ENCODE measurements at regions of chr3 and their contacts with region 1.

Region 1: DNA sequence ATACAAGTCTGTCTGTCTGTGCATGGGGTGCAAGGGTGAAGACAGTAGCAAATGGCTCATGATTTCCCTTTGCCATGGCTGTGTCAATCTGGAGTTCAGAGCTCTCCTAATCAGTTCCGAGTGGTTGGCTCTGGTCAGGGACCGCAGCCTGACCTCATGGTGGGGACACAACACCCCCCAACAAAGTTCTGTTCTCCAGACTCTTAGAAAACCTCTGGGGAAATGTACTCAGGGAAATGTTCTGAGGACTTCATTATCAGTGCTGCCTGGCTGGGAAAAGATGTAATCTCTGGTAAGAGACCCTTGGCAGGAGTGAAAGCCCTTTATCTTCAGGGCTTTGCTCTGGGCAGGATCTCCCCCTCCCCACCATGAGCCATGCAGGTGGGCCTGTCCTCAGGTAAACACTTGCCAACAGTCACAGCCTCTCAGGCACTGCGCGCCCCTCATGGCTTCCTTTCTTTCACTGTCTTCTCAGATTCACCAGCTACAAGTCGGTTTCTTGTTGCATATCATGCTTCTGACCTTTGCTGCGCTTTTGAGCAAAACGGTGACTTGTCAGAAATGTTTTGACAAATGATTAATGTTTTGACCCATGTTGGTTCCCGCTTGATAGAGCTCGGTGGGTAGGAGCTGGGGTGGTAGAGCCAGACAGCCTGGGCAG is 95.5 kb downstream of the ST6GAL1 start:
- DNase-seq: peak; percentile 59
- H3K4me3 Mint-ChIP-seq: peak overlapping the region; percentile 84
- H3K27ac Mint-ChIP-seq: peak overlapping the region; percentile 96
- H3K4me1 Mint-ChIP-seq: peaks cover 46% of the 10 kb centered on the region
- H3K27me3 Mint-ChIP-seq: no peaks in the 10 kb centered on the region

Region 2: DNA sequence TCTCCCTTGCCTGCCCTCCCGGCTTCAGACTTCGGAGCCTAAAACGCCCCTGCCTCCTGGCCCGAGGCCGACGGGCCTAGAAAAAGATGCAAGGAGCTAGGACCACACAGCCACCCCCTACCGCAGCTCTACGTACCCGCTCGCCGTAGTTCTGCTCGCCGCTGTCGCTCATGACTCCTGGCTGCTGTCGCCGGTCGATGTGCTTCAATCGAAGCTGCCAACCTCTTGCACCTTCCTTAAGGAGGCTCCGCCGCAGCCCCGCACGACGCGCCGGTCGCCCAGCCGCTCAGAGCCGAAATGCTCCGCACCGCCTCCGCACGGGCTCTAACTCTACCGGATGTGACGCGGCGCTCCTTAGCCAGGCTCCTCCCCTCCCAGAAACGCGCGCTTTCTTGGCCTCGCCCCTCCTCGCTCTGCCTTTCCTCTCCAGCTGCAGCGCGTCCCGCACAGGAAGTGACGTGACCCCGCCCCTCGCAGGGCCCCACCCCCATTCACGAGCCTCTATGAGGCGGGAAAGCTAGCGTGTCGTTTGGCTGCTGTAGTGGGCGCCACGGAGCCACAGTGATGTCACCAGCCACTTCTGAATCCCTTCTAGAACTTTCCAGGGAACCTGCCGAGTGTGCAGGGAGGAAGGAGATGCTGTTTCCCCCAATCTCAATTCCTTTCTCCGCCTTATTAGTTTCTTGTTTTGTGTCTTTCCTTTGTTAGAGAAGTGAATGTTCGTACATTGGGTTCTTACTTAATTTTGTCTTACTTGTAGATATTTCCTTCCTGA is 1087.9 kb before region 1 on chr3 and contains the start of gene TRA2B:
- CTCF ChIA-PET with region 1: no interaction called
- POLR2A ChIA-PET with region 1: no interaction called
- intact Hi-C with region 1: loop called (anchors 10 kb)
- DNase-seq: peak; percentile 99
- H3K4me3 Mint-ChIP-seq: peak within 1 kb of the TSS; percentile 99
- H3K27ac Mint-ChIP-seq: peak within 1 kb of the TSS; percentile 99
- H3K4me1 Mint-ChIP-seq: peaks cover 21% of the 10 kb centered on the region
- H3K27me3 Mint-ChIP-seq: peaks cover 3% of the 10 kb centered on the region
- total RNA-seq, gene TRA2B: 184 to 187 TPM

Region 3: GRCh38 chr3:187000711-187001151 is 25.1 kb before region 1 on chr3:
- CTCF ChIA-PET with region 1: interaction called, 3 read pairs
- POLR2A ChIA-PET with region 1: interaction called, 4 read pairs
- intact Hi-C with region 1: loop called (anchors 1 kb)
- DNase-seq: peak; percentile 63
- H3K4me3 Mint-ChIP-seq: peak overlapping the region; percentile 5
- H3K27ac Mint-ChIP-seq: peak overlapping the region; percentile 87
- H3K4me1 Mint-ChIP-seq: peaks cover 76% of the 10 kb centered on the region
- H3K27me3 Mint-ChIP-seq: no peaks in the 10 kb centered on the region

Region 4: GRCh38 chr3:187041362-187042307 is 15.8 kb after region 1 on chr3:
- CTCF ChIA-PET with region 1: interaction called, 8 read pairs
- POLR2A ChIA-PET with region 1: interaction called, 7 read pairs
- intact Hi-C with region 1: loop called (anchors 1 kb)
- DNase-seq: peak; percentile 70
- H3K4me3 Mint-ChIP-seq: peak overlapping the region; percentile 47
- H3K27ac Mint-ChIP-seq: peak overlapping the region; percentile 92
- H3K4me1 Mint-ChIP-seq: peaks cover 82% of the 10 kb centered on the region
- H3K27me3 Mint-ChIP-seq: no peaks in the 10 kb centered on the region

Region 5: GRCh38 chr3:187066228-187066995 is 40.6 kb after region 1 on chr3:
- CTCF ChIA-PET with region 1: interaction called, 4 read pairs
- POLR2A ChIA-PET with region 1: interaction called, 6 read pairs
- intact Hi-C with region 1: loop called (anchors 1 kb)
- DNase-seq: peak; percentile 61
- H3K4me3 Mint-ChIP-seq: no peak overlapping the region
- H3K27ac Mint-ChIP-seq: peak overlapping the region; percentile 66
- H3K4me1 Mint-ChIP-seq: peaks cover 60% of the 10 kb centered on the region
- H3K27me3 Mint-ChIP-seq: no peaks in the 10 kb centered on the region

Region 6: GRCh38 chr3:187130346-187131066 is 104.7 kb after region 1 on chr3:
- CTCF ChIA-PET with region 1: no interaction called
- POLR2A ChIA-PET with region 1: no interaction called
- intact Hi-C with region 1: loop called (anchors 2 kb)
- DNase-seq: peak; percentile 71
- H3K4me3 Mint-ChIP-seq: peak overlapping the region; percentile 50
- H3K27ac Mint-ChIP-seq: peak overlapping the region; percentile 96
- H3K4me1 Mint-ChIP-seq: peaks cover 34% of the 10 kb centered on the region
- H3K27me3 Mint-ChIP-seq: no peaks in the 10 kb centered on the region

Region 7: DNA sequence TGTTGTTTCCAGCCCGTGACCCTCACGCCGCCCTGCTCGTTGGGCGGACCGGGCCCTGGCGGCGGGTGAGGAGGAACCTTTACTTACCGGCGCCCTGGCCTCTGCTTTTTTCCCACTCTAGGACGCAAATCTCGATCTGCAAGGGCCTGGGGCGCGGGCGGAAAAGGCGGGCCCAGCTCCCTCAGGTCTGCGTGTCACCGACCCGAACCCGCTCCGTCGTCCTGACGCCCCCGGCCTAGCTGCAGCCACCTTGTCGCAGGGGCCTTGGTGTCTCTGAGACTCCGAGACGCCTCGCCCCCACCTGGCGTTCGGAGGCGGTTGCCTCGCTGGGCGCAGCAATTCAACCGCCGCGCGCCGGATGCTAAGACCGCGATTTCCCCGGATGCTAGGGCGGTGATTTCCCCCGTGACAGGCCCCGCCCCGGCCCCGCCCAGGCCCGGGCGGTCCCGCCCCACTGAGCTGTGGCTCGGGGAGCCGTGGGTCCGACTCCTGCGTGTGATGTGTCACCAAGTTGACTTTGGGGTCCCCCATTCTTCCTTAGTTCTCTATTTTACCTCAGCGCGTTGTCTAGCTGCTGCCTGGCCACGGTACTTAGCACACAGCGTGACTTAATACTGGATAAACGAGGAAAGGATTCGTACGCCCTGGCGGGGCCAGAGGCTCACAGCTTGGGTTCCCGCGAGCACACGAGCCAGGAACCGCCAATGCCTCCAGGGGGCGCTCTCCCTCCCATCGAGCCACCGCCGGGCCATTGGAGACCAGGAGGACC is 113.5 kb after region 1 on chr3 and contains the start of gene RPL39L:
- CTCF ChIA-PET with region 1: interaction called, 10 read pairs
- POLR2A ChIA-PET with region 1: interaction called, 4 read pairs
- intact Hi-C with region 1: loop called (anchors 2 kb)
- DNase-seq: peak; percentile 96
- H3K4me3 Mint-ChIP-seq: peak within 1 kb of the TSS; percentile 91
- H3K27ac Mint-ChIP-seq: peak within 1 kb of the TSS; percentile 93
- H3K4me1 Mint-ChIP-seq: peaks cover 22% of the 10 kb centered on the region
- H3K27me3 Mint-ChIP-seq: no peaks in the 10 kb centered on the region
- total RNA-seq, gene RPL39L: 22.5 to 25.2 TPM